Activated CD4-positive, alpha-beta T cell treated with anti-CD3 and anti-CD28 coated beads for 36 hours (primary cell): ENCODE measurements at regions of chr3 and their contacts with region 1.

Region 1: GRCh38 chr3:150097588-150097890 is 126.8 kb upstream of the PFN2 start:
- DNase-seq: no peak
- ATAC-seq: peak; percentile 90
- H3K4me3 Mint-ChIP-seq: no peak overlapping the region
- H3K27ac Mint-ChIP-seq: peak overlapping the region; percentile 71
- H3K4me1 Mint-ChIP-seq: peaks cover 13% of the 10 kb centered on the region
- H3K27me3 Mint-ChIP-seq: peaks cover 15% of the 10 kb centered on the region

Region 2: GRCh38 chr3:149736175-149736952 is 361.2 kb before region 1 on chr3:
- CTCF ChIA-PET with region 1: no interaction called
- POLR2A ChIA-PET with region 1: no interaction called
- intact Hi-C with region 1: no loop called
- DNase-seq: no peak
- ATAC-seq: no peak
- H3K4me3 Mint-ChIP-seq: no peak overlapping the region
- H3K27ac Mint-ChIP-seq: no peak overlapping the region
- H3K4me1 Mint-ChIP-seq: peaks cover 3% of the 10 kb centered on the region
- H3K27me3 Mint-ChIP-seq: no peaks in the 10 kb centered on the region

Region 3: GRCh38 chr3:149850787-149851584 is 246.6 kb before region 1 on chr3:
- CTCF ChIA-PET with region 1: no interaction called
- POLR2A ChIA-PET with region 1: no interaction called
- intact Hi-C with region 1: no loop called
- DNase-seq: no peak
- ATAC-seq: no peak
- H3K4me3 Mint-ChIP-seq: no peak overlapping the region
- H3K27ac Mint-ChIP-seq: no peak overlapping the region
- H3K4me1 Mint-ChIP-seq: peaks cover 7% of the 10 kb centered on the region
- H3K27me3 Mint-ChIP-seq: no peaks in the 10 kb centered on the region

Region 4: DNA sequence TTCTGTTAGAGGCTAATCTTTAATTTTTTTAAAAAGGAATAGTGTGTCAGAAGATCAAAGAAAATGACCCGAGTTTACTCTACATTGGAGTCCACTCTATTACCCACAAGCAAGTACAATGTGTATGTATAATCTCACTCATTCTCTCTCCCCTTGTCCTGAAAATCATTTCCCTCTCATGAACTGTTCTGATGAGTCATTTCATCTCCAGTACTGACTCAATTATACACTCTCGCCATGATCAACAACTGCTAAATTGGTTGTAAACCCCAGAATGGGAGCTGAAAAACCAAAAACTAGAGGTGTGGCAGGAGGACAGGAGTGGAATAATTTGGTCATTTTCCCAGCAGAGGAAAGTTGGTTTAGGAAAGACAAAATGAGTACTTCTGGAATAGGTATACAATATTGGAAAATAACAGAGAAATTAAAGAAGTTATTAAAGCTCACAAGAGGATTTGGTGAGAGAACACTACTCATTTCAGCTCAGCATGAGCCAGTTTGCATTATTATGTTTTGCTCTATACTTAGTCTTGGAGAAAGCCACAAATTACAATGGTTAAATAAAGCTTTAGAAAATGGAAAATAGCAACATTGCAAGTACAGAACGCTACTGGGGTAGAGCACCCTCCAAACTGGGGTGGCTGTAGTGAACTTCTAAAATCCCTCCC is 17.5 kb after region 1 on chr3:
- CTCF ChIA-PET with region 1: no interaction called
- POLR2A ChIA-PET with region 1: no interaction called
- intact Hi-C with region 1: loop called (anchors 1 to 2 kb)
- DNase-seq: no peak
- ATAC-seq: peak; percentile 89
- H3K4me3 Mint-ChIP-seq: no peak overlapping the region
- H3K27ac Mint-ChIP-seq: no peak overlapping the region
- H3K4me1 Mint-ChIP-seq: peaks cover 9% of the 10 kb centered on the region
- H3K27me3 Mint-ChIP-seq: peaks cover 30% of the 10 kb centered on the region

Region 5: DNA sequence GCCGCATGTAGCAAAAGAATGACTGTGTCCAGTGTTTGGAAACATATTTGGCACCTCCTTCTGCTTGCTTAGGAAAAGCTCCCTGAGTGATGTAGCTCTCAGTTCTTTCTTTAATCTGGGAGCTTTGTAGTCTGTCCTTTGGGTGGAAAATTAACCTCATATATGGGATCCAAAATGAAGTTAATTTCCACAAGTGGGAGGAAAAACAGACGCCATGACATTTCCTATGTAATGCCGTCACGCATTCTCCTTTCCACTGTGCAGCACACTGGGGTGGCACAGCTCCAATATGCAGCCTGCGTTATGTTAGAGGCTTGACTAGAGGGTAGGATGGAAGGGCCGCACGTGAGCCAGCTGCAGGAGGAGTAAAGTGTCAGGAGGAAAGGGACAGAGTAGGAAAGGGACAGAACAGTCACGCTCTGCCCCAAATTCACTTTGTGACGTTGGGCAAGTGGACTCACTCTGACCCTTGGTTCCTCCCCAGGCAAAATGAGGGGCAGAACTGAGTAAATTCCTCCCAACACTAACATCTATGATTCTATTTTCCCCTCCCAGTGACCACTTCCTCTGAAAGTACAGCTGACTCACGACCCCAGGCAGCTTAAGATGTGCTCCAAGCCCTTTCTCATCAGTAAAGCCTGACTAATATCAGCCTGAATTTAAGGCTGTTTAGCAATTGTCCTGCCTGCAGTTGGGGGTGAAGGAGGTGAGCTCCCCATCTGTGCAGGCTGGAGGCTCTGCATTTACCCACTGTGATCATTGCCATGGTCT is 49.6 kb after region 1 on chr3:
- CTCF ChIA-PET with region 1: no interaction called
- POLR2A ChIA-PET with region 1: no interaction called
- intact Hi-C with region 1: no loop called
- DNase-seq: peak; percentile 27
- ATAC-seq: peak; percentile 80
- H3K4me3 Mint-ChIP-seq: no peak overlapping the region
- H3K27ac Mint-ChIP-seq: no peak overlapping the region
- H3K4me1 Mint-ChIP-seq: no peaks in the 10 kb centered on the region
- H3K27me3 Mint-ChIP-seq: peaks cover 14% of the 10 kb centered on the region